Activated B cell treated with CpG ODN at 0.5 μM for 24 hours (primary cell): ENCODE measurements at regions of chr16 and their contacts with region 1.

Region 1: GRCh38 chr16:57300387-57301125 is 16.1 kb upstream of the PLLP start:
- DNase-seq: peak; percentile 100
- ATAC-seq: peak; percentile 92
- H3K4me3 Mint-ChIP-seq: no peak overlapping the region
- H3K27ac Mint-ChIP-seq: no peak overlapping the region
- H3K4me1 Mint-ChIP-seq: peaks cover 32% of the 10 kb centered on the region
- H3K27me3 Mint-ChIP-seq: no peaks in the 10 kb centered on the region
- CTCF ChIP-seq: peak; percentile 75

Region 2: GRCh38 chr16:57244767-57245471 is 55.6 kb before region 1 on chr16 and contains the start of gene ARL2BP:
- CTCF ChIA-PET with region 1: no interaction called
- POLR2A ChIA-PET with region 1: interaction called, 6 read pairs
- intact Hi-C with region 1: loop called (anchors 1 kb)
- DNase-seq: peak; percentile 95
- ATAC-seq: peak; percentile 95
- H3K4me3 Mint-ChIP-seq: peak within 1 kb of the TSS; percentile 94
- H3K27ac Mint-ChIP-seq: peak within 1 kb of the TSS; percentile 91
- H3K4me1 Mint-ChIP-seq: peaks cover 40% of the 10 kb centered on the region
- H3K27me3 Mint-ChIP-seq: no peaks in the 10 kb centered on the region
- CTCF ChIP-seq: no peak
- total RNA-seq, gene ARL2BP: 27.1 and 29.4 TPM in 2 replicates

Region 3: GRCh38 chr16:57358527-57359095 is 58.1 kb after region 1 on chr16 and contains the start of gene CCL22:
- CTCF ChIA-PET with region 1: no interaction called
- POLR2A ChIA-PET with region 1: interaction called, 8 read pairs
- intact Hi-C with region 1: loop called (anchors 1 kb)
- DNase-seq: peak; percentile 36
- ATAC-seq: peak; percentile 84
- H3K4me3 Mint-ChIP-seq: peak within 1 kb of the TSS; percentile 85
- H3K27ac Mint-ChIP-seq: peak within 1 kb of the TSS; percentile 82
- H3K4me1 Mint-ChIP-seq: peaks cover 32% of the 10 kb centered on the region
- H3K27me3 Mint-ChIP-seq: no peaks in the 10 kb centered on the region
- CTCF ChIP-seq: no peak
- total RNA-seq, gene CCL22: 276 and 288 TPM in 2 replicates

Region 4: DNA sequence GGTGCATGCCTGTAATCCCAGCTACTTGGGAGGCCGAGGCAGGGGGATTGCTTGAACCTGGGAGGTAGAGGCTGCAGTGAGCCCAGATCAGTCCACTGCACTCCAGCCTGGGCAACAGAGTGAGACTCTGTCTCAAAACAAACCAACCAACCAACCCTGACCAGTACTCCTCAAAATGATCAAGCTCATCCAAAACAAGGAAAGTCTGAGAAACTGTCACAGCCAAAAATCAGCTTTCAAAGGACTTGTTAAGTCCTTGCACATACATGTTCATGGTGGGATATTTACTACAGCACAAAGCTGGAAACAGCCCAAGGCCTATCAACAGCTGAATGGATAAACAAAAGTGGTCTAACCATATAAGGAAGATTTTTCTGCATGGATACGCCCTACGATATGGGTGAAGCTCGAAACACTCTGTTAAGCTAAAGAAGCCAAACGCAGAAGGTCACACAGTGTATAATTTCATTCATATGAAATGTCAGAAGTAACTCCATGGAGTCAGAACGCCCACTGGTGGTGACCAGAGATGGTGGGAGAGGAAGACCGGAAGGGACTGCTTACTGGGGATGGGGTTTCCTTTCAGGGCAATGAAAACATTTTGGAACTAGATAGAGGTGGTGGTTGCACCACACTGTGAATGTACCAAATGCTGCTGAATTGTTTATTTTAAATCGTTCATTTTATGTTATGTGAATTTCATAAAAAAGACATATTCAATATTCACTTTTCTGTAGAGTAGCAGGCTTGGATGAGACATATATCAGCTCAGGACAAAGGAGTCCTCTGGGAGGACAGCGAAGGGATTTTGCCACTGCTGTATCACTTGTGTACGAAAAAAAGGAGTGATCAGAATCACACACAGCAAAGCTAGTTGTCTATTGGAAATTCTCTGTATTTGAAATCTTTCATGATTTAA is 121.7 kb after region 1 on chr16:
- CTCF ChIA-PET with region 1: interaction called, 215 read pairs
- POLR2A ChIA-PET with region 1: interaction called, 63 read pairs
- intact Hi-C with region 1: loop called (anchors 1 kb)
- DNase-seq: no peak
- ATAC-seq: peak; percentile 29
- H3K4me3 Mint-ChIP-seq: no peak overlapping the region
- H3K27ac Mint-ChIP-seq: no peak overlapping the region
- H3K4me1 Mint-ChIP-seq: peaks cover 14% of the 10 kb centered on the region
- H3K27me3 Mint-ChIP-seq: no peaks in the 10 kb centered on the region
- CTCF ChIP-seq: no peak

Region 5: GRCh38 chr16:57535680-57536305 is 235.2 kb after region 1 on chr16:
- CTCF ChIA-PET with region 1: no interaction called
- POLR2A ChIA-PET with region 1: no interaction called
- intact Hi-C with region 1: loop called (anchors 2 kb)
- DNase-seq: peak; percentile 87
- ATAC-seq: peak; percentile 70
- H3K4me3 Mint-ChIP-seq: peak overlapping the region; percentile 85
- H3K27ac Mint-ChIP-seq: peak overlapping the region; percentile 89
- H3K4me1 Mint-ChIP-seq: peaks cover 83% of the 10 kb centered on the region
- H3K27me3 Mint-ChIP-seq: no peaks in the 10 kb centered on the region
- CTCF ChIP-seq: no peak

Region 6: GRCh38 chr16:58009856-58010416 is 709.4 kb after region 1 on chr16:
- CTCF ChIA-PET with region 1: no interaction called
- POLR2A ChIA-PET with region 1: no interaction called
- intact Hi-C with region 1: loop called (anchors 5 kb)
- DNase-seq: no peak
- ATAC-seq: no peak
- H3K4me3 Mint-ChIP-seq: no peak overlapping the region
- H3K27ac Mint-ChIP-seq: no peak overlapping the region
- H3K4me1 Mint-ChIP-seq: peaks cover 3% of the 10 kb centered on the region
- H3K27me3 Mint-ChIP-seq: no peaks in the 10 kb centered on the region
- CTCF ChIP-seq: no peak